Naive thymus-derived CD4-positive, alpha-beta T cell (primary cell): ENCODE measurements at regions of chr1 and their contacts with region 1.

Region 1: GRCh38 chr1:153670859-153671627 is at the start of gene ILF2:
- DNase-seq: peak; percentile 85 to 100 (median 98)
- ATAC-seq: peak; percentile 93
- H3K4me3 ChIP-seq: peak within 1 kb of the TSS; percentile 94
- H3K4me3 Mint-ChIP-seq: no peak within 1 kb of the TSS
- H3K27ac ChIP-seq: peak within 1 kb of the TSS; percentile 93
- H3K27ac Mint-ChIP-seq: peak within 1 kb of the TSS in 2 of 9 donors; percentile 62 to 73
- H3K4me1 ChIP-seq: peaks cover 18 to 19% of the 10 kb centered on the region in 2 donors
- H3K4me1 Mint-ChIP-seq: peaks cover 11 to 28% (median 17%) of the 10 kb centered on the region in 7 donors
- H3K27me3 ChIP-seq: no peaks in the 10 kb centered on the region
- H3K27me3 Mint-ChIP-seq: peaks cover 0 to under 1% (median 0%) of the 10 kb centered on the region in 5 donors
- total RNA-seq, gene ILF2: 83.6 to 177 (median 113) TPM

Region 2: DNA sequence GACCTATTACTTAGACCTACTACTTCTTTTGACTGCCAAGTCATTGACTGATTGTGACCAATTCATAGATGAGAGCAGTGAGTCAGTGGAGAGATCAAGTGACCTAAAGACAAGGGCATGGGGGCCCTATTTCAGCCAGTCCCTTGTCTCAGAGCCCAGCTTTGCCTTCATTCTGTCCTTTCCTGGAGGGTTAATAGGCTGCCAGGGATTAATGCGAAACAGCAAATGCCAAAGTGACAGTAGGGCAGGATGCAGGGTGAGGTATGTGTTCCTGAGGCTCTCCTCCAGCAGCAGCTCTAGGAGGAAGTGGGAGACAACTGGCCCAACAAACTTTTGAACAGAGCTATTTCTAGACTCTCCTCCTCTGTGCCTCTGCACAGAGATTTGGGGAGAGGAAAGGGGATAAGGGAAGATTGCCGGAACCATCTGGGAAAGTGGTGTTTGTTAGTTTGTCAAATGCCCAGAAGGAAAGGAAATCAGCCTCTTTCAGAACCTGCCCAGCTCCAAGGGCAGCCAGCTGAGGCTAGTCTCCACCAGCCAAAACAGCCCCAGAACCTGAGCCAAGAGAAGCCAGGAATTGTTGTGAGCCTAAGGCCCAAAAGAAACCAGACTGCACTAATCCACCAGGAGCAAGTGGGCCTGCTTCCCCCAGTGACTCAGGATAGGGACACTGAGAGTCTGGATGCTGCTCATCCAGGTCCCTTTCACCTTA is 117.1 kb before region 1 on chr1:
- CTCF ChIA-PET with region 1: no interaction called
- POLR2A ChIA-PET with region 1: no interaction called
- intact Hi-C with region 1: no loop called
- DNase-seq: no peak
- ATAC-seq: peak; percentile 53
- H3K4me3 ChIP-seq: no peak overlapping the region
- H3K4me3 Mint-ChIP-seq: no peak overlapping the region
- H3K27ac ChIP-seq: no peak overlapping the region
- H3K27ac Mint-ChIP-seq: no peak overlapping the region
- H3K4me1 ChIP-seq: no peaks in the 10 kb centered on the region
- H3K4me1 Mint-ChIP-seq: peaks cover 1 to 24% (median 7%) of the 10 kb centered on the region in 7 donors
- H3K27me3 ChIP-seq: no peaks in the 10 kb centered on the region
- H3K27me3 Mint-ChIP-seq: no peaks in the 10 kb centered on the region

Region 3: GRCh38 chr1:153572569-153573015 is 98.5 kb before region 1 on chr1:
- CTCF ChIA-PET with region 1: interaction called, 3 read pairs
- POLR2A ChIA-PET with region 1: no interaction called
- intact Hi-C with region 1: loop called in 1 of 2 experiments (anchors 2 kb)
- DNase-seq: peak in 8 of 9 donors; percentile 24 to 51 (median 41)
- ATAC-seq: peak; percentile 81
- H3K4me3 ChIP-seq: no peak overlapping the region
- H3K4me3 Mint-ChIP-seq: no peak overlapping the region
- H3K27ac ChIP-seq: no peak overlapping the region
- H3K27ac Mint-ChIP-seq: peak overlapping the region in 1 of 9 donors; percentile 56
- H3K4me1 ChIP-seq: peaks cover 0 to 9% of the 10 kb centered on the region in 2 donors
- H3K4me1 Mint-ChIP-seq: peaks cover 9 to 23% (median 16%) of the 10 kb centered on the region in 7 donors
- H3K27me3 ChIP-seq: no peaks in the 10 kb centered on the region
- H3K27me3 Mint-ChIP-seq: peaks cover 0 to 16% (median 9%) of the 10 kb centered on the region in 5 donors

Region 4: GRCh38 chr1:153658400-153659174 is 12.5 kb before region 1 on chr1 and contains the start of gene SNAPIN:
- CTCF ChIA-PET with region 1: interaction called, 3 read pairs
- POLR2A ChIA-PET with region 1: interaction called, 38 read pairs
- intact Hi-C with region 1: loop called (anchors 1 kb)
- DNase-seq: peak; percentile 81 to 94 (median 88)
- ATAC-seq: peak; percentile 98
- H3K4me3 ChIP-seq: peak within 1 kb of the TSS; percentile 93
- H3K4me3 Mint-ChIP-seq: peak within 1 kb of the TSS; percentile 91 to 97 (median 94)
- H3K27ac ChIP-seq: peak within 1 kb of the TSS; percentile 90
- H3K27ac Mint-ChIP-seq: peak within 1 kb of the TSS; percentile 90 to 98 (median 91)
- H3K4me1 ChIP-seq: peaks cover 9 to 13% of the 10 kb centered on the region in 2 donors
- H3K4me1 Mint-ChIP-seq: peaks cover 8 to 26% (median 14%) of the 10 kb centered on the region in 7 donors
- H3K27me3 ChIP-seq: no peaks in the 10 kb centered on the region
- H3K27me3 Mint-ChIP-seq: no peaks in the 10 kb centered on the region
- total RNA-seq, gene SNAPIN: 10.2 to 43.5 (median 29.8) TPM

Region 5: GRCh38 chr1:153922972-153923925 is 252.2 kb after region 1 on chr1 and contains the start of gene GATAD2B:
- CTCF ChIA-PET with region 1: no interaction called
- POLR2A ChIA-PET with region 1: no interaction called
- intact Hi-C with region 1: loop called (anchors 1 to 2 kb)
- DNase-seq: peak; percentile 86 to 100 (median 99)
- ATAC-seq: peak; percentile 94
- H3K4me3 ChIP-seq: peak within 1 kb of the TSS; percentile 87
- H3K4me3 Mint-ChIP-seq: peak within 1 kb of the TSS; percentile 83 to 96 (median 94)
- H3K27ac ChIP-seq: peak within 1 kb of the TSS; percentile 97
- H3K27ac Mint-ChIP-seq: peak within 1 kb of the TSS; percentile 90 to 99 (median 97)
- H3K4me1 ChIP-seq: peaks cover 35% of the 10 kb centered on the region in 2 donors
- H3K4me1 Mint-ChIP-seq: peaks cover 31 to 53% (median 44%) of the 10 kb centered on the region in 7 donors
- H3K27me3 ChIP-seq: no peaks in the 10 kb centered on the region
- H3K27me3 Mint-ChIP-seq: peaks cover 0 to 3% (median 0%) of the 10 kb centered on the region in 5 donors
- total RNA-seq, gene GATAD2B: 67.3 to 102 (median 75.5) TPM

Region 6: DNA sequence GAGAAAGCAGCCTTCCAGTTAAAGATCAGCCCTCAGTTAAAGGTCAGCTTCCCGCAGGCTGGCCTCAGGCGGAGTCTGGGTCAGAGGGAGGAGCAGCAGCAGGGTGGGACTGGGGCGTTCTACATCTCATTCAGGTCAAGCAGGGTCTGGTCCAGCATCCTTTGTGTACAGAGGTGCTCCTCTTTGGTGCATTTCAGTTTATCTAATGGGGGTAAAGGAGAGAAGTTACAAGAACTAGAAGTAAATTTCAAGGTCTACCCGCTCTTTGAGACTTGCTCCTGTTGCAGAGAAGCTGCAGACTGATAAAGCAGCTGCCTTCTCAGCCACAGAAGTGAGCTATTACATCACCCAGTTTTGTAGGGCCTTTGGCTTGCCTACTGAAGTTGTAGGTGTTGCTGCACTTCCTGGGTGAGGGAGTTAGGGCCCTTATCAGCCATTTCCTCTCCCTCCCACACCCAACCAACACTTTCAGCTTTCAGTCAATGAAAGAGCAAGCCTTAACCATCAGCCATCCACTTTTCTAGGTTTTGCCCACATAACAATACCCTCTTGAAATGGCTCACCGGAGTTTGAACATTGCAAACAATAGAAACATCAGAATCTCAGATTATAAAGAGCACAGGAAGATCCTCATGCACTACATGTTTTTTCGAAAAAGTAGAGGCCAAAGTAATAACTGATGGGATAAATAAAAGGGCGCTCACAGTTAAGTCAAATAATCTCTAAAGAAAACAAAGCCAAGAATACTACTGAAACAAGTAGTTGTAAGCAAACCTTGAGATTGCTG is 486.7 kb after region 1 on chr1:
- CTCF ChIA-PET with region 1: no interaction called
- POLR2A ChIA-PET with region 1: no interaction called
- intact Hi-C with region 1: loop called in 1 of 2 experiments (anchors 10 kb)
- DNase-seq: peak in 8 of 9 donors; percentile 71 to 90 (median 86)
- ATAC-seq: peak; percentile 98
- H3K4me3 ChIP-seq: peak overlapping the region; percentile 12
- H3K4me3 Mint-ChIP-seq: peak overlapping the region; percentile 71 to 90 (median 79)
- H3K27ac ChIP-seq: peak overlapping the region; percentile 74
- H3K27ac Mint-ChIP-seq: peak overlapping the region; percentile 89 to 97 (median 94)
- H3K4me1 ChIP-seq: peaks cover 34 to 71% of the 10 kb centered on the region in 2 donors
- H3K4me1 Mint-ChIP-seq: peaks cover 36 to 81% (median 69%) of the 10 kb centered on the region in 7 donors
- H3K27me3 ChIP-seq: no peaks in the 10 kb centered on the region
- H3K27me3 Mint-ChIP-seq: no peaks in the 10 kb centered on the region

Region 7: GRCh38 chr1:154627257-154628120 is 956.4 kb after region 1 on chr1:
- CTCF ChIA-PET with region 1: no interaction called
- POLR2A ChIA-PET with region 1: no interaction called
- intact Hi-C with region 1: loop called in 1 of 2 experiments (anchors 5 kb)
- DNase-seq: peak; percentile 78 to 92 (median 90)
- ATAC-seq: peak; percentile 81
- H3K4me3 ChIP-seq: peak overlapping the region; percentile 72
- H3K4me3 Mint-ChIP-seq: peak overlapping the region; percentile 85 to 100 (median 94)
- H3K27ac ChIP-seq: peak overlapping the region; percentile 99
- H3K27ac Mint-ChIP-seq: peak overlapping the region; percentile 98 to 100 (median 99)
- H3K4me1 ChIP-seq: peaks cover 15% of the 10 kb centered on the region in 2 donors
- H3K4me1 Mint-ChIP-seq: peaks cover 20 to 54% (median 44%) of the 10 kb centered on the region in 7 donors
- H3K27me3 ChIP-seq: no peaks in the 10 kb centered on the region
- H3K27me3 Mint-ChIP-seq: peaks cover 0 to 20% (median 7%) of the 10 kb centered on the region in 5 donors